GM13976 (cell line): ENCODE measurements at regions of chr12 and their contacts with region 1.

Region 1: GRCh38 chr12:31659087-31659933 is at the start of gene ETFBKMT:
- DNase-seq: peak; percentile 91
- CTCF ChIP-seq: peak; percentile 25

Region 2: DNA sequence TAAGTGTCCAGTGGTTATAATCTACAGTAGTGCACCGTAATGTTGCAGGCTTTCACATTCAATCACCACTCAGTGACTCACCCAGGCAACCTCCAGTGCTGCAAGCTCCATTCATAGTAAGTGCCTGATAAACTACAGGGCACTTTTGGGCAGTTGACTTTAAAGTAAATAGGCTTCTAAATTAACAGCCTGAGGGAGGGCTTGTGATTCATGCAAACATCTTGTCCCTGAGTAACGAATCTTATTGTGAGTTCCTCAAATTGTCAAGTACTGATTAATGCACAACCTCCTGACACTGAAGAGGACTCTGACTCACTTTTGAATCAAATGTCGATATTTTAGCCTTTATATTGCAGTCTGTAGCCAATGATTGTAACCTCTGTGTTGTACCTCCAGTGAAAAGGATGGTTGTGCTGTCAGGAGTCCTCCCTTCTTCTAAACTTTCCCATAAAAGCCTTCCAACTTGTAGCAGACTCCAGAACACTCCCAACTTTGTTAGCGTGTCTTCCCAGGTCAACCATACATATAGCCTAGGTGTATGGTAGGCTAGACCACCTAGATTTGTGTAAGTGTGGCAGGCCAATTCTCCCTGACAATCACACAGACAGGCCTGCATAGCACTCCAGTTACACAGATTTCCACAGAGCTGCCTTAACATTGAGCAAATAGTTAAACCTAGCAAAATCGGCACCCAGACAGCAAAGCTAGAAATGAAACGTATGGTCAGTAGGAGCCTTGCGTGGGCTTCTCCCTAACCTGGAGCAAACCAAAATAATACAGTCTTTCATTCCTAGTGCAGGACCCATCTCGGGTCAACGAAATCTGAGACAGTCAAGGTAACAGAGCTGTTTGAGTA is 392.5 kb after region 1 on chr12:
- in situ Hi-C with region 1: loop called (anchors 25 kb)
- DNase-seq: no peak
- CTCF ChIP-seq: no peak

Region 3: GRCh38 chr12:32302218-32303173 is 643.2 kb after region 1 on chr12:
- in situ Hi-C with region 1: loop called (anchors 10 kb)
- DNase-seq: peak; percentile 72
- CTCF ChIP-seq: peak; percentile 58

Region 4: DNA sequence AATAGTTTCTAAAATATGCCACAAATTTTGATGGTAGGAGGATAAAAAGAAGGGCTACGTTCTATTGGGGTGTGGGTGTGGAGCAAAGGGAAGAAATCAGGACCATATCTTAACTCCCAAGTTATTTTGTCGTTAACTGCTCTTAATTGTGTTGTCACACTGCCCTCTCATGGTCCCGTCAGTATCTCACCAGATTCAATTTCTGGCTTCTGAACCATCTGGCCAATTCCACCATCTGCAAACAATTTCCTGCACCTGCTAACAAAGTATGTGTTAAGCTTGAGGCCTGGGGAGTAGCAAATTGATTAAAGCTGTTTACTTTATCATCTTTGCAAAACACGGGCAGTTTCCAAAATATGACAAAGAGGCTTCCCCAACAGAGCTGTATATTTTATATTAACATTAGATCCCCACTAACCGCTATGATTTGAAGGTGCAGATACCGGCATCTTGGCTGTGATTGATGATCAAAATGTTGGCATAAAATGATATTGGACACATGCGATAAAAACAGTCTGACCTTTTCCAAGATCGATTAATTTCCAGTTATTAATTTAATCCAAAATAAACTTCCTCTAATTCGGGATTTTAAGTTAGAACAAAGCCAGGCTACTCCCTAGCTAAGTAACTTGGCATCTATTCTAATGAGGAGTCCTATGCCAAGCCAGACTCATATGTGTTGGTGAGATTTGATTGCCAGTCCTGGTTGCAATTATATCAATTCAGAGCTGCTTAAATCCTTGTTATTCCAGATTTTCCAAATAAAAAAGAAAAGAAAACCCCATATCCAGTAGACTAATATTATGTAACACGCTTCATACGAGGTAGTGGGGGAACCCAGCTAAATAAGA is 1012.8 kb after region 1 on chr12:
- in situ Hi-C with region 1: loop called (anchors 25 kb)
- DNase-seq: peak; percentile 64
- CTCF ChIP-seq: peak; percentile 41